ENCODE measurements at regions of chr4 and their contacts with region 1.

Region 1: GRCh38 chr4:19520939-19521520 is 730.7 kb upstream of the SLIT2 start:
- DNase-seq: no peak
- H3K4me3 ChIP-seq: no peak overlapping the region
- H3K27ac ChIP-seq: no peak overlapping the region
- H3K4me1 ChIP-seq: no peaks in the 10 kb centered on the region
- H3K27me3 ChIP-seq: no peaks in the 10 kb centered on the region
- CTCF ChIP-seq: no peak

Region 2: GRCh38 chr4:19319607-19320006 is 201.4 kb before region 1 on chr4:
- CTCF ChIA-PET with region 1: no interaction called
- POLR2A ChIA-PET with region 1: no interaction called
- intact Hi-C with region 1: no loop called
- DNase-seq: no peak
- H3K4me3 ChIP-seq: no peak overlapping the region
- H3K27ac ChIP-seq: no peak overlapping the region
- H3K4me1 ChIP-seq: no peaks in the 10 kb centered on the region
- H3K27me3 ChIP-seq: no peaks in the 10 kb centered on the region
- CTCF ChIP-seq: no peak

Region 3: GRCh38 chr4:19783667-19784223 is 262.7 kb after region 1 on chr4:
- CTCF ChIA-PET with region 1: no interaction called
- POLR2A ChIA-PET with region 1: interaction called, 13 read pairs
- intact Hi-C with region 1: no loop called
- DNase-seq: no peak
- H3K4me3 ChIP-seq: no peak overlapping the region
- H3K27ac ChIP-seq: no peak overlapping the region
- H3K4me1 ChIP-seq: no peaks in the 10 kb centered on the region
- H3K27me3 ChIP-seq: no peaks in the 10 kb centered on the region
- CTCF ChIP-seq: no peak